Cardiac septum (tissue), 1 donor: ENCODE measurements at regions of chr2 and their contacts with region 1.

Region 1: GRCh38 chr2:241734467-241735208 is at the start of gene D2HGDH:
- DNase-seq: peak; percentile 98
- total RNA-seq, gene D2HGDH: 15.7 TPM

Region 2: GRCh38 chr2:241774646-241775222 is 40.1 kb after region 1 on chr2:
- intact Hi-C with region 1: no loop called
- DNase-seq: no peak

Region 3: GRCh38 chr2:241877989-241878970 is 143.6 kb after region 1 on chr2:
- intact Hi-C with region 1: loop called (anchors 5 kb)
- DNase-seq: no peak